Dendritic cell treated with granulocyte-macrophage colony-stimulating factor and Interleukin-4, amounts not matched to agents 40 ng/mL and 50 ng/mL, for 4 days (primary cell): ENCODE measurements at regions of chr19 and their contacts with region 1.

Region 1: GRCh38 chr19:2840794-2841790 is at the start of gene ZNF555:
- H3K4me3 Mint-ChIP-seq: peak within 1 kb of the TSS; percentile 95
- H3K27ac Mint-ChIP-seq: peak within 1 kb of the TSS; percentile 99
- H3K4me1 Mint-ChIP-seq: peaks cover 19% of the 10 kb centered on the region
- H3K27me3 Mint-ChIP-seq: no peaks in the 10 kb centered on the region

Region 2: GRCh38 chr19:2820112-2820702 is 20.9 kb before region 1 on chr19:
- intact Hi-C with region 1: loop called (anchors 2 kb)
- H3K4me3 Mint-ChIP-seq: peak overlapping the region; percentile 75
- H3K27ac Mint-ChIP-seq: peak overlapping the region; percentile 75
- H3K4me1 Mint-ChIP-seq: peaks cover 17% of the 10 kb centered on the region
- H3K27me3 Mint-ChIP-seq: peaks cover 3% of the 10 kb centered on the region

Region 3: DNA sequence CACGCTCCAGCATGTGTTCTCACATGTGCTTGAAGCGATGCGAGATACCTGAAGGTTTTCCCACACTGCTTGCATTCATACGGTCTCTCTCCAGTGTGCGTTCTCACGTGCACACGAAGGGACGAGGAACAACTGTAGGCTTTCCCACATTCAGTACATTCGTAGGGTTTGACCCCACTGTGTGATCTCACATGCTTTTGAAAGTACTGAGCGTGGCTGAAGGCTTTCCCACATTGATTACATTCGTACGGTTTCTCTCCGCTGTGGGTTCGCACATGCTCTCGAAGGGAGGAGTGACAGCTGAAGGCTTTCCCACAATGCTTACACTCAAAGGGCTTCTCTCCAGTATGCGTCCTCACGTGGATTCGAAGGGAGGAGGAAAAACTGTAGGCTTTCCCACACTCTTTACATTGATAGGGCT is 92.4 kb after region 1 on chr19:
- intact Hi-C with region 1: loop called (anchors 10 kb)
- H3K4me3 Mint-ChIP-seq: no peak overlapping the region
- H3K27ac Mint-ChIP-seq: no peak overlapping the region
- H3K4me1 Mint-ChIP-seq: no peaks in the 10 kb centered on the region
- H3K27me3 Mint-ChIP-seq: no peaks in the 10 kb centered on the region